Calu3 (cell line): ENCODE measurements at regions of chr2 and their contacts with region 1.

Region 1: DNA sequence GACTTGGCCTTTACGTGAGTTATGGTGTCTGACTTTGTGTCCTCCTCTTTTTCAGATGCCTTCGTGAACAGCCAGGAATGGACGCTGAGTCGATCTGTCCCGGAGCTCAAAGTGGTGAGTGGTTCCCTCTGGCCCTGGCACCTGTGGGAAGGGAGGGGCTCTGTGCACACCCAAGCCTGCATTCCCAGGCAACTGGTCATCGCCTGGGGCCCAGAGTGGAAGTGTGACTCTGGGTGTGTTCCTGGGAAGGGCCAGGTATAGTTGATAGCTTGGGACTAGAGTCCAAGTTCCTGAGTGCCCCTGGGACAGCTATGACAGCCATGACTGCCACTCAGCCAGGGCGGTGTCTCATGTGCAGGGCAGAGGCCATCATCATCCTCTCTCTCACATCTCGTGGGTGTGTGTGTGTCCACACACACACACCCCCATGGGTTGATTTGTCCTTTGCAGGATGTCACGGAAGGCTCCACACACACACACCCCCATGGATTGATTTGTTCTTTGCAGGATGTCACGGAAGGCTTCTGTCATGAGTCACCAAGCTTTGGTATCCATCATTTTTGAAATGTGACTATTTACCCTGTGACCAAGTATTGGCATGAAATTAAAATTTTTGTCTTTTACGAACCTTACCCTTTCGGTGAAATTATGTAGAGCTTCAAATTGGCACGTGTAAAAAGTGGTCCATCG is 215.4 kb downstream of the AGAP1 start:
- DNase-seq: peak; percentile 94
- H3K4me3 Mint-ChIP-seq: peak overlapping the region; percentile 62
- H3K27ac Mint-ChIP-seq: peak overlapping the region; percentile 97
- H3K4me1 Mint-ChIP-seq: peaks cover 60% of the 10 kb centered on the region
- H3K27me3 Mint-ChIP-seq: no peaks in the 10 kb centered on the region
- CTCF ChIP-seq: no peak

Region 2: GRCh38 chr2:235618039-235618438 is 91.2 kb before region 1 on chr2:
- CTCF ChIA-PET with region 1: no interaction called
- intact Hi-C with region 1: no loop called
- DNase-seq: no peak
- H3K4me3 Mint-ChIP-seq: no peak overlapping the region
- H3K27ac Mint-ChIP-seq: no peak overlapping the region
- H3K4me1 Mint-ChIP-seq: peaks cover 19% of the 10 kb centered on the region
- H3K27me3 Mint-ChIP-seq: no peaks in the 10 kb centered on the region
- CTCF ChIP-seq: no peak

Region 3: GRCh38 chr2:235669983-235670962 is 39.0 kb before region 1 on chr2:
- CTCF ChIA-PET with region 1: no interaction called
- intact Hi-C with region 1: loop called (anchors 5 kb)
- DNase-seq: peak; percentile 61
- H3K4me3 Mint-ChIP-seq: peak overlapping the region; percentile 85
- H3K27ac Mint-ChIP-seq: no peak overlapping the region
- H3K4me1 Mint-ChIP-seq: peaks cover 48% of the 10 kb centered on the region
- H3K27me3 Mint-ChIP-seq: no peaks in the 10 kb centered on the region
- CTCF ChIP-seq: peak; percentile 28

Region 4: GRCh38 chr2:235675678-235676535 is 33.4 kb before region 1 on chr2:
- CTCF ChIA-PET with region 1: interaction called, 13 read pairs
- intact Hi-C with region 1: loop called (anchors 5 kb)
- DNase-seq: peak; percentile 7
- H3K4me3 Mint-ChIP-seq: peak overlapping the region; percentile 22
- H3K27ac Mint-ChIP-seq: peak overlapping the region; percentile 17
- H3K4me1 Mint-ChIP-seq: peaks cover 84% of the 10 kb centered on the region
- H3K27me3 Mint-ChIP-seq: no peaks in the 10 kb centered on the region
- CTCF ChIP-seq: peak; percentile 44

Region 5: GRCh38 chr2:235746257-235747084 is 37.2 kb after region 1 on chr2:
- CTCF ChIA-PET with region 1: interaction called, 10 read pairs
- intact Hi-C with region 1: no loop called
- DNase-seq: peak; percentile 69
- H3K4me3 Mint-ChIP-seq: no peak overlapping the region
- H3K27ac Mint-ChIP-seq: no peak overlapping the region
- H3K4me1 Mint-ChIP-seq: peaks cover 11% of the 10 kb centered on the region
- H3K27me3 Mint-ChIP-seq: no peaks in the 10 kb centered on the region
- CTCF ChIP-seq: peak; percentile 76